ENCODE measurements at regions of chr11 and their contacts with region 1.

Region 1: DNA sequence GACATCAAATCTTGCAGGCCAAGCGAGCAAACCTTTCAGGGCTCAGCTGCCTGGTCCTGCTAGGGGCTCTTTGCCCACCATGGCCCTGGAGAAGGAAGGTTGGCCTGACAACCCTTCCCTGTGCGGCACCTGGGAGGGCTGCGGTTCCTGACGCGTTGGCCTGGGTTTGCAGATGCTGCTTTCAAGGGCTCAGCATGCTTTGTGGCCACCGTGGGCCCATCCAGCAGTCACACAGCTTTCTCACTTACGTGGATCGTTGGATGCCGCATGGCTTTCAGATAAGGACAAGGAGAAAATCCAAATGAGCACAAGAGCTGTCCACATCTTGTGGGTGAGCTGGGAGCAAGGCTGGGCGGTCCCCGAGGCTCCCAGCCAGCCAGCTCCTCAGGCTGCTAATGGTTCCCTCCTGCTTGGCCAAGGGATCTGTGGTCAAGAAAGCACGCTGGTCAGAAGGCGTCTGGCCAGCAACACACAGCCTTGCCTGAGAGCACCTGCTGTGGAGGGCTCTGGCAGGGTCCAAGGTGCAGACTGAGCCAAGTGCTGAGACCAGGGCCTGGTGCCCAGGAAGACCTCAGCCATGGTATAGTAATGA is 8.2 kb downstream of the C11orf24 start:
- DNase-seq: no peak
- H3K4me3 ChIP-seq: no peak overlapping the region
- H3K27ac ChIP-seq: no peak overlapping the region
- H3K4me1 ChIP-seq: no peaks in the 10 kb centered on the region
- H3K27me3 ChIP-seq: no peaks in the 10 kb centered on the region
- CTCF ChIP-seq: no peak
- POLR2A ChIP-seq: no peak

Region 2: DNA sequence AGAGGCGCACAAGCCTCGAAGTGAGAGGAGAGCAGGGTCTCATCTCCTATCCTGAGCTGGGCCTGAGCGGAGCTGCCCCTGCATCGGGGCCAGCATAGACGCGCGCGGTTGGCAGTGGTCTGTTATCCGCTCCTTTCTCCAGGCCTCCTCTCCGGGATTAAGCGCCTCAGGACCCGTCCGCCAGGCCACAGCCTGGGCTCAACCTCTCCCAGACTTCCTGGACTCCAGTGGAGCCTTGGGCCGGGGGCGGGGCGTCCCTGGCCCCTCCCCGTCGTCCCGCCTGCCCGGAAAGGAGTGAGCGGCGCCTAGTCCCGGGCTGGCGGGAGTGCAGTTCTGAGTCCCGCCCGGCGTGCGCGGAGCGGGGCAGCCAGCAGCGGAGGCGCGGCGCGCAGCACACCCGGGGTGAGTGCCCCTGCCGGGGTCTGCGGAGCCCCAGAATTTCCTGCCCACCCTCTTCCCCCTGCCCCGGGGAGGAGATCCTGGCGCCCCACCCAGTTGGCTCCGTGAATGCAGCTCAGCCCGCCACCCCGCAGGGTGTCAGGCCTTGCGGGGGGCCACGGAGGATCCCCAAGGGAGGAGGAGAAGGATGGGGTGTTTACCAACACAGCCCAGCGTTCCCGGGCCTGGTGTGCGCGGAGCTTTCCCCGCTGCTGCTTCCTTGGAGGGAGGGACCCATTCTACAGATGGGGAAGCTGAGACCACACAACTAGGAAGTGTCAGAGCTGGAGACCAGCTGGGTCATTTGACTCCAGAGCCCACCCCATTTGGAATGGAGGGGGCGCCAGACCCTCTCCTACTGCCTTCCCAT is 224.6 kb before region 1 on chr11 and contains the start of gene TCIRG1:
- intact Hi-C with region 1: no loop called
- DNase-seq: peak; percentile 83
- H3K4me3 ChIP-seq: peak within 1 kb of the TSS; percentile 58 to 67
- H3K27ac ChIP-seq: peak within 1 kb of the TSS; percentile 76 to 87
- H3K4me1 ChIP-seq: peaks cover 24% of the 10 kb centered on the region
- H3K27me3 ChIP-seq: no peaks in the 10 kb centered on the region
- CTCF ChIP-seq: no peak
- POLR2A ChIP-seq: no peak
- total RNA-seq, gene TCIRG1: 52.8 to 53.6 TPM

Region 3: GRCh38 chr11:68302670-68303069 is 39.1 kb after region 1 on chr11:
- intact Hi-C with region 1: loop called (anchors 5 kb)
- DNase-seq: no peak
- H3K4me3 ChIP-seq: no peak overlapping the region
- H3K27ac ChIP-seq: no peak overlapping the region
- H3K4me1 ChIP-seq: peaks cover 5% of the 10 kb centered on the region
- H3K27me3 ChIP-seq: no peaks in the 10 kb centered on the region
- CTCF ChIP-seq: no peak
- POLR2A ChIP-seq: no peak

Region 4: GRCh38 chr11:68430801-68431200 is 167.3 kb after region 1 on chr11:
- intact Hi-C with region 1: no loop called
- DNase-seq: no peak
- H3K4me3 ChIP-seq: no peak overlapping the region
- H3K27ac ChIP-seq: no peak overlapping the region
- H3K4me1 ChIP-seq: no peaks in the 10 kb centered on the region
- H3K27me3 ChIP-seq: no peaks in the 10 kb centered on the region
- CTCF ChIP-seq: no peak
- POLR2A ChIP-seq: no peak

Measured in testis (tissue), 5 donors.